Caco-2 (cell line): ENCODE measurements at regions of chr12 and their contacts with region 1.

Region 1: DNA sequence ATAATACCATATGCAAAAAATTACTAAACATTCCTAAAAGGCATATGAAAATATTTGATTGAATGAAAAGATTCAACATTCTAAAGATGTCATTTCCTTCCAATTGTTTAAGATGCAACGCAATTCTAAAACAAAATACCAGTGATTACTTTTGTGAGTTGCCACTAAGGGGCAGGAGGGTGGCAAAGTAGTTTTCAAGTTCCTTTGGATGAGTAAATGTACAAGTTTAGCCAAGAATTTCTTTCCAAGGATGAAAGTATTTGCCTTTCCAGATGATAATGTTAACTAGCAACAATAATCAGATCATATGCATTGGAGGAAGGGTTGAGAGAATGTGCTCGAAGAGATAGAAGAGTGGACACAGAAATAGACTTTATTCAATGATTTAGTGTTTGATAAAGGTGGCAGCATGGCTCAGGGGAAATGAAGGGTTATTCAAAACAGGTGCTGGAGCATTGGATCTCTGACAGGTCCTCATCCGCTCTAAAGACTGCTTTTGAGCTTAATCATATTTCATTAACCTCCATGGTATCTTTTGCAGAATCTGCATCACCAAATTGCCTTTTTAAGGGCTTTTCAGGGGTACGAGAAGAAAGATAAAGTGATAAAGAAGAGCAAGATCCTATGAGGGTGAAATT is 678.5 kb upstream of the TBX3 start:
- DNase-seq: no peak
- H3K4me3 ChIP-seq: no peak overlapping the region
- H3K4me3 Mint-ChIP-seq: no peak overlapping the region
- H3K27ac Mint-ChIP-seq: no peak overlapping the region
- H3K4me1 ChIP-seq: 0 out of 2 replicates have a peak, but pooled peaks cover 2% of the 10 kb centered on the region
- H3K4me1 Mint-ChIP-seq: no peaks in the 10 kb centered on the region
- H3K27me3 ChIP-seq: no peaks in the 10 kb centered on the region
- H3K27me3 Mint-ChIP-seq: no peaks in the 10 kb centered on the region
- CTCF ChIP-seq: peak in 1 of 2 experiments; percentile 3

Region 2: DNA sequence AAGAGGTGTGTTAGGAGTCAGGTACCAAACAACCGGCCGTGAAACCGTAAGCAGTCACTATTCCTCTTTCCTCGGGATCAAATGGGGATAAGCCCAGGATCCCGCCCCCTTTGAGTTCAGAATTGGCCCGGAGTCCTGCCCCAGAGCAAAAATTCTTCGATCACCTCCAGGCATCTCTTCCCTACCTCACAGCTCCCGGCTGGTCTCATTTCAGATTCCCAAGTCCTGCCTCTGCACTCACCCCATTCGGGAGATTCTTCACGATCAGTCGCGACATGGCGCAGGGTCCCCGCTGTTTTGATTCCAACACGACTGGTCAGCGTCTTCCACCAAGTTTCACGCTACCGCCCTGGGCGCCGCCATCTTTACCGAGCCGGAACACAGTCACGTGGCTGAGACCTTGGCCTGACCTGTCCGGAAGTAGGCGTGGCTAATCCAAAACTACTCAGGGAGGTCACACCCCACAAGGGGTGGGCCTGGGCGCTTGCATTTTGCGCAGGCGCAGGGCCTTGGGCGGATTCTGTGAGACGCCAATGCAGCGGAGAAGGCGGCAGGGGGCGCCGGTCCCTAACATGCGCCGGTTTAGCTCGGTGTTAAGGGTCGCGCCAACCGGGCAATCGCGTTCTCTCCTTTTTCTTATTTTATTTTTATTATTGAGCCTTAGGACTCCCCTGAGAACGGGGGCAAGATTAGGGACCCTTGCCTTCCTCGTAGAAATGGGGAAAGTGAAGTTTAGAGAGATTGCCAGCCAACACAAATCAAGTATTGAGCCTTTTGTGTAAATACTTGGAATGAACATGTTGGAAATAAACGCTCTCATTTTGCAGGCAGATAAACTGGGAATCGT is 1396.3 kb before region 1 on chr12 and contains the start of gene RBM19:
- CTCF ChIA-PET with region 1: no interaction called
- POLR2A ChIA-PET with region 1: interaction called, 11 read pairs
- intact Hi-C with region 1: no loop called
- DNase-seq: peak; percentile 97
- H3K4me3 ChIP-seq: peak within 1 kb of the TSS; percentile 75
- H3K4me3 Mint-ChIP-seq: peak within 1 kb of the TSS; percentile 91
- H3K27ac Mint-ChIP-seq: peak within 1 kb of the TSS; percentile 92
- H3K4me1 ChIP-seq: no peaks in the 10 kb centered on the region
- H3K4me1 Mint-ChIP-seq: peaks cover 16% of the 10 kb centered on the region
- H3K27me3 ChIP-seq: no peaks in the 10 kb centered on the region; the same call in 1 of the 2 replicates
- H3K27me3 Mint-ChIP-seq: peaks cover 15% of the 10 kb centered on the region
- CTCF ChIP-seq: peak; percentile 88 to 94
- total RNA-seq, gene RBM19: 35.7 and 41.4 TPM in 2 replicates

Region 3: GRCh38 chr12:114812858-114813761 is 549.3 kb before region 1 on chr12:
- CTCF ChIA-PET with region 1: no interaction called
- POLR2A ChIA-PET with region 1: no interaction called
- intact Hi-C with region 1: no loop called
- DNase-seq: peak in 1 of 2 experiments; percentile 21
- H3K4me3 ChIP-seq: no peak overlapping the region
- H3K4me3 Mint-ChIP-seq: peak overlapping the region; percentile 45
- H3K27ac Mint-ChIP-seq: peak overlapping the region; percentile 33
- H3K4me1 ChIP-seq: peaks cover 14% of the 10 kb centered on the region
- H3K4me1 Mint-ChIP-seq: peaks cover 30% of the 10 kb centered on the region
- H3K27me3 ChIP-seq: no peaks in the 10 kb centered on the region
- H3K27me3 Mint-ChIP-seq: no peaks in the 10 kb centered on the region
- CTCF ChIP-seq: no peak

Region 4: GRCh38 chr12:115235880-115236279 is 126.6 kb before region 1 on chr12:
- CTCF ChIA-PET with region 1: no interaction called
- POLR2A ChIA-PET with region 1: no interaction called
- intact Hi-C with region 1: no loop called
- DNase-seq: no peak
- H3K4me3 ChIP-seq: no peak overlapping the region
- H3K4me3 Mint-ChIP-seq: no peak overlapping the region
- H3K27ac Mint-ChIP-seq: no peak overlapping the region
- H3K4me1 ChIP-seq: no peaks in the 10 kb centered on the region
- H3K4me1 Mint-ChIP-seq: no peaks in the 10 kb centered on the region
- H3K27me3 ChIP-seq: no peaks in the 10 kb centered on the region
- H3K27me3 Mint-ChIP-seq: no peaks in the 10 kb centered on the region
- CTCF ChIP-seq: no peak

Region 5: GRCh38 chr12:115402443-115403180 is 40.2 kb after region 1 on chr12:
- CTCF ChIA-PET with region 1: no interaction called
- POLR2A ChIA-PET with region 1: no interaction called
- intact Hi-C with region 1: no loop called
- DNase-seq: no peak
- H3K4me3 ChIP-seq: no peak overlapping the region
- H3K4me3 Mint-ChIP-seq: no peak overlapping the region
- H3K27ac Mint-ChIP-seq: no peak overlapping the region
- H3K4me1 ChIP-seq: peaks cover 46% of the 10 kb centered on the region
- H3K4me1 Mint-ChIP-seq: peaks cover 35% of the 10 kb centered on the region
- H3K27me3 ChIP-seq: no peaks in the 10 kb centered on the region
- H3K27me3 Mint-ChIP-seq: no peaks in the 10 kb centered on the region
- CTCF ChIP-seq: no peak